Right ventricle myocardium inferior (tissue), 1 donor: ENCODE measurements at regions of chr9 and their contacts with region 1.

Region 1: DNA sequence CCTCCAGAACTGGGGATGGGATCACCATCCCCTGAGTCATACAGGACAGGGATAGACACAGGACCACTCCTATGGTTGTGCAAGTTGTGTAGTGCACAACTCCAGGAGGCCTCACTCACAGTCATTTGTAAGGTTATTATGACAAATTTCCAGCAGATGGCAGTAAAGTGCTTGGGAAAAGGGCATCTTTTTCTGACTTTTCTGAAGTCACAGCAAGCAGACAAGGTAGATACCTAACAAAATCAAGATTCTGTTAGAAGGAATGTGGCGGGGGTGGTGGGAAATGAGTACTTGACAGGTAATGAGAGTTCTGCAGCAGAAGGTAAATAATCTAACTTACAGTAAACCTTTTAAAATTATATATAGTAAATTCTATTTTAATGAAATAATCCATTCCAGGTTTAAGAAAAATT is 16.7 kb upstream of the KIF27 start:
- DNase-seq: no peak
- ATAC-seq: no peak

Region 2: GRCh38 chr9:84027201-84027600 is 89.3 kb after region 1 on chr9:
- intact Hi-C with region 1: no loop called
- DNase-seq: no peak
- ATAC-seq: no peak

Region 3: GRCh38 chr9:84261082-84261746 is 323.3 kb after region 1 on chr9:
- intact Hi-C with region 1: loop called (anchors 1 kb)
- DNase-seq: peak; percentile 87
- ATAC-seq: peak; percentile 94

Region 4: GRCh38 chr9:84315278-84315877 is 377.5 kb after region 1 on chr9:
- intact Hi-C with region 1: loop called (anchors 2 kb)
- DNase-seq: no peak
- ATAC-seq: peak; percentile 26